MCF 10A (cell line): ENCODE measurements at regions of chrX and their contacts with region 1.

Region 1: GRCh38 chrX:13653022-13653693 is at the start of gene TCEANC:
- DNase-seq: peak; percentile 98
- H3K4me3 Mint-ChIP-seq: peak within 1 kb of the TSS; percentile 89
- H3K27ac Mint-ChIP-seq: peak within 1 kb of the TSS; percentile 59
- H3K4me1 Mint-ChIP-seq: peaks cover 5% of the 10 kb centered on the region
- H3K27me3 Mint-ChIP-seq: peaks cover 20% of the 10 kb centered on the region
- CTCF ChIP-seq: no peak
- total RNA-seq, gene TCEANC: 4.0 TPM in 2 replicates

Region 2: DNA sequence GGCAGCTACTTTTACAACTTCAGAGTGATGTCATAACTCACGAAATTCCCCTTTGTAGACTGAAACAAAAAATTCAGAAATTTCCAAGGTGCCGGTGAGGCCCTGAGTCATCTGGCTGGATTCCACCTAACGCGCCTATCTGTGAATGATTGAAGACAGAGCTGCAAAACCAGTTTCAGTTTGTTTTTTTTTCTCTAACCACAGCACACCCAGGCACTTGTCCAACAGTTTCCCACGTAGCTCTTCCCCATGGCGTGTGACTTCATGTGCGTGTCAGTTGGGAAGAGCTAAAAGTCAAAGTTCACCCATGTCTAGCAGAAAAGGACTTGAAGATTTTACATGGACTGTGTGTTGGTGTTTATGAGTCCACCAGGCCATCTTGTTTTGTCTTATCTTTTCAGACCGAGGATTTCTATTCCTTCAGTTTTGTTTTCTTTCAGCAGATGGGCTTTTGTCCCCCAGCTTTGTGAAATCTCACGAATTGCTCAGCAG is 16.1 kb after region 1 on chrX:
- CTCF ChIA-PET with region 1: no interaction called
- POLR2A ChIA-PET with region 1: interaction called, 13 read pairs
- intact Hi-C with region 1: no loop called
- DNase-seq: peak; percentile 99
- H3K4me3 Mint-ChIP-seq: peak overlapping the region; percentile 41
- H3K27ac Mint-ChIP-seq: peak overlapping the region; percentile 90
- H3K4me1 Mint-ChIP-seq: no peaks in the 10 kb centered on the region
- H3K27me3 Mint-ChIP-seq: peaks cover 22% of the 10 kb centered on the region
- CTCF ChIP-seq: no peak